Activated B cell treated with CpG ODN at 0.5 μM for 24 hours (primary cell): ENCODE measurements at regions of chr4 and their contacts with region 1.

Region 1: GRCh38 chr4:128863312-128864075 is 54.0 kb downstream of the JADE1 start:
- DNase-seq: peak; percentile 48
- ATAC-seq: peak; percentile 38
- H3K4me3 Mint-ChIP-seq: no peak overlapping the region
- H3K27ac Mint-ChIP-seq: peak overlapping the region; percentile 62
- H3K4me1 Mint-ChIP-seq: peaks cover 37% of the 10 kb centered on the region
- H3K27me3 Mint-ChIP-seq: no peaks in the 10 kb centered on the region
- CTCF ChIP-seq: peak; percentile 60

Region 2: DNA sequence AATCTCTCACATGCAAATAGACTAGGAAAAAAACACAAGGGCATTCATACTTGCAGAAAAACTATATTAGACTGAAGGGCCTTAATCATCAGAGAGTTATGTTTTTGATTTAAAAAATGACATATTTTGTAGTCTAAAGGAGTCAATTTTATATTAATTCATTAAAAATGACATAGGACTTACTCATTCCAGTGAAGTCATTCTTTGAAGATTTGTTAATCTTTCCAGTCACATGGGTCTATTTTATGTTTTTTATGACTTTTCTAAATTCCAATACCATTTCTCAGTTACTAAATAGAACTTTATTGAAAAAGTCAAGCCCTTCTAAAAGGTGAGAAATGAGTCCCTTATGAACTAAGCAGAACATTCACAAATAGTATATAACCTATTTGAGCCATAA is 1974.5 kb before region 1 on chr4:
- CTCF ChIA-PET with region 1: no interaction called
- POLR2A ChIA-PET with region 1: no interaction called
- intact Hi-C with region 1: no loop called
- DNase-seq: no peak
- ATAC-seq: no peak
- H3K4me3 Mint-ChIP-seq: no peak overlapping the region
- H3K27ac Mint-ChIP-seq: no peak overlapping the region
- H3K4me1 Mint-ChIP-seq: no peaks in the 10 kb centered on the region
- H3K27me3 Mint-ChIP-seq: no peaks in the 10 kb centered on the region
- CTCF ChIP-seq: no peak

Region 3: GRCh38 chr4:128191115-128191781 is 672.2 kb before region 1 on chr4:
- CTCF ChIA-PET with region 1: interaction called, 5 read pairs
- POLR2A ChIA-PET with region 1: no interaction called
- intact Hi-C with region 1: loop called (anchors 1 kb)
- DNase-seq: peak; percentile 31
- ATAC-seq: peak; percentile 92
- H3K4me3 Mint-ChIP-seq: no peak overlapping the region
- H3K27ac Mint-ChIP-seq: no peak overlapping the region
- H3K4me1 Mint-ChIP-seq: no peaks in the 10 kb centered on the region
- H3K27me3 Mint-ChIP-seq: no peaks in the 10 kb centered on the region
- CTCF ChIP-seq: peak; percentile 79

Region 4: GRCh38 chr4:128454281-128455075 is 409.0 kb before region 1 on chr4:
- CTCF ChIA-PET with region 1: interaction called, 5 read pairs
- POLR2A ChIA-PET with region 1: no interaction called
- intact Hi-C with region 1: loop called (anchors 1 kb)
- DNase-seq: no peak
- ATAC-seq: peak; percentile 88
- H3K4me3 Mint-ChIP-seq: no peak overlapping the region
- H3K27ac Mint-ChIP-seq: no peak overlapping the region
- H3K4me1 Mint-ChIP-seq: peaks cover 8% of the 10 kb centered on the region
- H3K27me3 Mint-ChIP-seq: peaks cover 6% of the 10 kb centered on the region
- CTCF ChIP-seq: no peak

Region 5: GRCh38 chr4:128574706-128575105 is 288.8 kb before region 1 on chr4:
- CTCF ChIA-PET with region 1: interaction called, 3 read pairs
- POLR2A ChIA-PET with region 1: no interaction called
- intact Hi-C with region 1: loop called (anchors 1 kb)
- DNase-seq: peak; percentile 20
- ATAC-seq: peak; percentile 45
- H3K4me3 Mint-ChIP-seq: no peak overlapping the region
- H3K27ac Mint-ChIP-seq: no peak overlapping the region
- H3K4me1 Mint-ChIP-seq: no peaks in the 10 kb centered on the region
- H3K27me3 Mint-ChIP-seq: no peaks in the 10 kb centered on the region
- CTCF ChIP-seq: no peak

Region 6: DNA sequence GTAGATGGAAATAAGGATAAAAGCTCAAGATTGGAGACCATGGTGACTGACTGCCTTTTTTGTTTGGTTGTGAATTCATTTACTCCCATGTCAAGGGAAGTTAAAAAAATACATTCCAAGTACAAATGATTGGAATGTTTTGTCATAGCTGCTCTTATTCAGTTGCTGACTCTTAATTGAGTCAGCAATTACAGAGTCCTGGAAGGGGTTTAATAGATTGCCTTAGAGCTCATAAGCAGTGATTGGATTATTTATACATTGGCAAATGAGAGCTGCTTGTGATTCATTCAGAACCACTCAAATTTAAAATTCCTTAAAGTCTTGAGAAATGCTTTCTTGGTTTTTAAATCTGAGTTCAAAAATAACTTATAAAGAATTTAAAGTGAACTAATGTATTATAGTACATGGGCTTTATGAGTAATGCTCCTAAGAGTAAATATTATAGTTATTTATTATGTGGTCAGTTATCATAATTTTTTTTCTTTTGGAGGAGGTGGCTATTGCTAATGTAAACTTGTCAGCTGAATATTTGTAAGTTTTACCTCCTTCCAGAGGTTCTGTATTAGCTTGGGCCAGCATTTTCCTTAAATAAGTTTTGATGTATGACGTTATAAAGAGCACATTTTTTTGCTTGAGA is 40.4 kb before region 1 on chr4:
- CTCF ChIA-PET with region 1: interaction called, 3 read pairs
- POLR2A ChIA-PET with region 1: interaction called, 3 read pairs
- intact Hi-C with region 1: loop called (anchors 5 kb)
- DNase-seq: no peak
- ATAC-seq: no peak
- H3K4me3 Mint-ChIP-seq: no peak overlapping the region
- H3K27ac Mint-ChIP-seq: no peak overlapping the region
- H3K4me1 Mint-ChIP-seq: peaks cover 57% of the 10 kb centered on the region
- H3K27me3 Mint-ChIP-seq: no peaks in the 10 kb centered on the region
- CTCF ChIP-seq: no peak

Region 7: GRCh38 chr4:129162450-129162849 is 299.0 kb after region 1 on chr4:
- CTCF ChIA-PET with region 1: no interaction called
- POLR2A ChIA-PET with region 1: no interaction called
- intact Hi-C with region 1: no loop called
- DNase-seq: no peak
- ATAC-seq: no peak
- H3K4me3 Mint-ChIP-seq: no peak overlapping the region
- H3K27ac Mint-ChIP-seq: no peak overlapping the region
- H3K4me1 Mint-ChIP-seq: no peaks in the 10 kb centered on the region
- H3K27me3 Mint-ChIP-seq: peaks cover 8% of the 10 kb centered on the region
- CTCF ChIP-seq: no peak

Region 8: GRCh38 chr4:129428454-129428853 is 565.0 kb after region 1 on chr4:
- CTCF ChIA-PET with region 1: no interaction called
- POLR2A ChIA-PET with region 1: no interaction called
- intact Hi-C with region 1: no loop called
- DNase-seq: no peak
- ATAC-seq: no peak
- H3K4me3 Mint-ChIP-seq: no peak overlapping the region
- H3K27ac Mint-ChIP-seq: no peak overlapping the region
- H3K4me1 Mint-ChIP-seq: no peaks in the 10 kb centered on the region
- H3K27me3 Mint-ChIP-seq: peaks cover 1% of the 10 kb centered on the region
- CTCF ChIP-seq: no peak